Activated CD8-positive, alpha-beta T cell treated with anti-CD3 and anti-CD28 coated beads for 36 hours (primary cell): ENCODE measurements at regions of chr12 and their contacts with region 1.

Region 1: DNA sequence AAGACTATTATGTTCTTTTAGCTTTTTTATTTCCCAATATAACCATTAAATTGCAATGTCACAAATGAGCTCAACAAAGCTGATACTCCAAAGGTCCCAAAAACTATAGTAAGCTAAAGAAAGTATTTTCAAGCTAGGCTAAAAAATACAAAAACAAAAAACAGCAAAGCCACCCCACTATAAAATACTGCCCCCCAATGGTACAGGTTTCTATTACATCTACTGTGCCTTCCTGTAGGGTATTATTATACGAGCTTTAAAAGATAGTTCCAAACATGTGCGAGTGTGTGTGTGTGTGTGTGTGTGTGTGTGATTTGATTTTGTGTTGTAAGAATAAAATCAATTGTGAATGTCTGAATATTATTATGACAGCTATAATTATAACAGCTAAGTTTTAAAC is 1.1 kb downstream of the IFNG start:
- DNase-seq: peak; percentile 57
- ATAC-seq: peak; percentile 43
- H3K4me3 Mint-ChIP-seq: peak overlapping the region; percentile 82
- H3K27ac Mint-ChIP-seq: peak overlapping the region; percentile 83
- H3K4me1 Mint-ChIP-seq: peaks cover 57% of the 10 kb centered on the region
- H3K27me3 Mint-ChIP-seq: no peaks in the 10 kb centered on the region
- CTCF ChIP-seq: peak; percentile 81

Region 2: GRCh38 chr12:68094645-68095395 is 63.6 kb before region 1 on chr12:
- CTCF ChIA-PET with region 1: interaction called, 10 read pairs
- POLR2A ChIA-PET with region 1: no interaction called
- intact Hi-C with region 1: no loop called
- DNase-seq: no peak
- ATAC-seq: no peak
- H3K4me3 Mint-ChIP-seq: no peak overlapping the region
- H3K27ac Mint-ChIP-seq: no peak overlapping the region
- H3K4me1 Mint-ChIP-seq: peaks cover 11% of the 10 kb centered on the region
- H3K27me3 Mint-ChIP-seq: no peaks in the 10 kb centered on the region
- CTCF ChIP-seq: no peak

Region 3: GRCh38 chr12:68119724-68120211 is 38.7 kb before region 1 on chr12:
- CTCF ChIA-PET with region 1: interaction called, 58 read pairs
- POLR2A ChIA-PET with region 1: interaction called, 5 read pairs
- intact Hi-C with region 1: loop called (anchors 2 kb)
- DNase-seq: peak; percentile 86
- ATAC-seq: peak; percentile 72
- H3K4me3 Mint-ChIP-seq: peak overlapping the region; percentile 11
- H3K27ac Mint-ChIP-seq: no peak overlapping the region
- H3K4me1 Mint-ChIP-seq: peaks cover 26% of the 10 kb centered on the region
- H3K27me3 Mint-ChIP-seq: peaks cover 2% of the 10 kb centered on the region
- CTCF ChIP-seq: no peak

Region 4: GRCh38 chr12:68169213-68169889 is 10.9 kb after region 1 on chr12:
- CTCF ChIA-PET with region 1: interaction called, 43 read pairs
- POLR2A ChIA-PET with region 1: no interaction called
- intact Hi-C with region 1: no loop called
- DNase-seq: no peak
- ATAC-seq: peak; percentile 24
- H3K4me3 Mint-ChIP-seq: no peak overlapping the region
- H3K27ac Mint-ChIP-seq: no peak overlapping the region
- H3K4me1 Mint-ChIP-seq: peaks cover 29% of the 10 kb centered on the region
- H3K27me3 Mint-ChIP-seq: no peaks in the 10 kb centered on the region
- CTCF ChIP-seq: no peak

Region 5: GRCh38 chr12:68180792-68181744 is 22.6 kb after region 1 on chr12:
- CTCF ChIA-PET with region 1: interaction called, 43 read pairs
- POLR2A ChIA-PET with region 1: interaction called, 11 read pairs
- intact Hi-C with region 1: no loop called
- DNase-seq: peak; percentile 78
- ATAC-seq: peak; percentile 93
- H3K4me3 Mint-ChIP-seq: peak overlapping the region; percentile 28
- H3K27ac Mint-ChIP-seq: peak overlapping the region; percentile 82
- H3K4me1 Mint-ChIP-seq: peaks cover 62% of the 10 kb centered on the region
- H3K27me3 Mint-ChIP-seq: no peaks in the 10 kb centered on the region
- CTCF ChIP-seq: no peak

Region 6: DNA sequence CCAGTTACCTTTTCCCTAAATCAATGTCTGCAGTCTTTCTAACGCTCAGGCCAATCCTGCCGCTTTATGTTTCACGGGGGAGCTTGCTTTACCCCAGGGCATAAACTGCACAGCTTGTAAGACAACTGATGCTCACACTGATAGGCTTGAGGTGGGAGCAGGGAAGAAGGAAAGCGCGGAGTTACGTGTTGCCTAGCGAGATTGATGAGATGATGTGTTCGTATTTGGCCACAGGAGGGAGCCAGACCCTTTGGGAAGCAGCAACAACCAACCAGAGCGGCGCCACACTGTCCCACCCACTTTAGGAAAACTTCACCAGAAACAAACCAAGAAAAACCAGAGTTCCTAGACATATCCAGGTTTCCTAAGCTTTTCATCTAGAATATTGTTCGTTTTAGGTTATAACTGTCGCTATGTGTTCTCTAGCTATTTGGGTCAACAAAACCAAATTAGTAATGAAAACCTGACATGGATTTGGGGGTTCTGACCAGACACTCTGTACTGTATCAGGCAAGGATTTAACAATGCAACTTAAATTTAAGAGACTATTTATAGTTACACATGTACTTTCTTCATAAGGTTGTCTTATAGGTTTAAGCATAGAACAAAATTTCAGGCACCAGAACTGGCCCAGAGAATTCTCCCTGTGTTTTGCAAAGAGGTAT is 64.8 kb after region 1 on chr12:
- CTCF ChIA-PET with region 1: interaction called, 23 read pairs
- POLR2A ChIA-PET with region 1: no interaction called
- intact Hi-C with region 1: no loop called
- DNase-seq: peak; percentile 86
- ATAC-seq: peak; percentile 92
- H3K4me3 Mint-ChIP-seq: peak overlapping the region; percentile 20
- H3K27ac Mint-ChIP-seq: peak overlapping the region; percentile 53
- H3K4me1 Mint-ChIP-seq: peaks cover 11% of the 10 kb centered on the region
- H3K27me3 Mint-ChIP-seq: peaks cover 2% of the 10 kb centered on the region
- CTCF ChIP-seq: peak; percentile 96